ENCODE measurements at regions of chr5 and their contacts with region 1.

Region 1: GRCh38 chr5:109546461-109546860 is 136.7 kb upstream of the PJA2 start:
- DNase-seq: no peak
- H3K4me3 ChIP-seq: no peak overlapping the region
- CTCF ChIP-seq: no peak
- POLR2A ChIP-seq: no peak

Region 2: DNA sequence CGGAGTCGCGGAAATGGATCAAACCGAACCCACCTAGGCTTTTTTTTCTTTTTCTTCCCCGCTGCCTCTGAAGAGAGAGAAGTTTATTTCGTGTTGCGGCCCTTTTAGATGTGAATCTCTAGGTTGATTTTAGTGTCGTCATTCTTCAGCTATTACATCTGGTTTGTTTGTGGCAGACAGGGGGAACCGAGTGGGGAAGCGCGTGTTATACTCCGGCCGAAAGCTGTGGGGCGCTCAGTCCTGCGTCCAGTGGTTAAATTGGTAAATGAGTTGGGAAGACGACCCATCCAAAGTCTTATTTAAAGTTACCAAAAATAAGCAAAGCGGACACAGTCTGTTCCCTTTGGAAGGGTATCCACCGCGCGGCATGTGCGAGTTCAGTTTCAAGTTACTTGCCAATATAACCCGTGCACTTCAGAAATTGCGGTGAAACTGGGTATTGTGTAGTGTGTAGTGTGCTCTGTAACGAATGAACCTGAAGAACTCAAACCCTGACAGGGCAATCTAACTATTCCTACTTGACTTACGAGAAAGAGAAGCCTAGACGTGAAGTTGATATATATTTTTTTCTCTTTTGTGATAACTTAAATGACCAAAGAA is 144.6 kb after region 1 on chr5:
- intact Hi-C with region 1: no loop called
- DNase-seq: peak; percentile 76 to 95
- H3K4me3 ChIP-seq: peak overlapping the region; percentile 88
- CTCF ChIP-seq: no peak
- POLR2A ChIP-seq: no peak

Region 3: GRCh38 chr5:110377943-110378342 is 831.5 kb after region 1 on chr5:
- intact Hi-C with region 1: loop called (anchors 5 kb)
- DNase-seq: no peak
- H3K4me3 ChIP-seq: no peak overlapping the region
- CTCF ChIP-seq: no peak
- POLR2A ChIP-seq: no peak

Region 4: DNA sequence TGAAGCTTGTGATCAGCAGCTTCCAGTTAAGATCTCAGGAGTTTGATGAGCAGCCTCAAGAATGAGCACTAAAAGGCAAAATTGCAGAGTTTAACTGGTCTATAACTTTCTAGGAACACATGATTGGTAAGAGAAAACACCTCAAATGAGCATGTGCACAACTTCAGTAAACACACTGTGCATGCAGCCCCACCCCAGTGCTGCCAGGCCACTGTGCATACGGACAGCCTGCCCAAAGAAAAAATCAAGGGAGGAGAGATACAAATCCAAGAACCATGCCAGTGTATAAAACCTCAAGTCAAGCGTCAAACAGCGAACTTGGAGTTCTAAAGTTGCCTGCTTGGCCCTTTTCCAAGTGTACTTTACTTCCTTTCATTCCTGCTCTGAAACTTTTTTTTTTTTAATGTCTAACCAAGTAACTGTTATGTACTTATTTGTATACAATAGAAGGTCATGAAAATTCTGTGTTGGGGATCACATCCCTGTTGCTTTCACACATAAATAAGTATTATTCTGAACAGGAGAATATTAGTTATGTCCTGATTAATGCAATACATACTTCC is 1399.5 kb after region 1 on chr5:
- intact Hi-C with region 1: no loop called
- DNase-seq: no peak
- H3K4me3 ChIP-seq: no peak overlapping the region
- CTCF ChIP-seq: no peak
- POLR2A ChIP-seq: no peak